Activated CD8-positive, alpha-beta T cell treated with anti-CD3 and anti-CD28 coated beads, Interleukin-2, amount 10 ng/mL, durations not matched to agents 7 days and 5 days (primary cell): ENCODE measurements at regions of chr2 and their contacts with region 1.

Region 1: GRCh38 chr2:118003396-118003824 is 10.5 kb downstream of the CCDC93 start:
- DNase-seq: peak; percentile 71
- ATAC-seq: peak; percentile 98
- H3K4me3 Mint-ChIP-seq: no peak overlapping the region
- H3K27ac Mint-ChIP-seq: no peak overlapping the region
- H3K4me1 Mint-ChIP-seq: peaks cover 7% of the 10 kb centered on the region
- H3K27me3 Mint-ChIP-seq: no peaks in the 10 kb centered on the region

Region 2: GRCh38 chr2:117656546-117656945 is 346.9 kb before region 1 on chr2:
- CTCF ChIA-PET with region 1: no interaction called
- POLR2A ChIA-PET with region 1: no interaction called
- DNase-seq: no peak
- ATAC-seq: no peak
- H3K4me3 Mint-ChIP-seq: no peak overlapping the region
- H3K27ac Mint-ChIP-seq: no peak overlapping the region
- H3K4me1 Mint-ChIP-seq: no peaks in the 10 kb centered on the region
- H3K27me3 Mint-ChIP-seq: no peaks in the 10 kb centered on the region

Region 3: DNA sequence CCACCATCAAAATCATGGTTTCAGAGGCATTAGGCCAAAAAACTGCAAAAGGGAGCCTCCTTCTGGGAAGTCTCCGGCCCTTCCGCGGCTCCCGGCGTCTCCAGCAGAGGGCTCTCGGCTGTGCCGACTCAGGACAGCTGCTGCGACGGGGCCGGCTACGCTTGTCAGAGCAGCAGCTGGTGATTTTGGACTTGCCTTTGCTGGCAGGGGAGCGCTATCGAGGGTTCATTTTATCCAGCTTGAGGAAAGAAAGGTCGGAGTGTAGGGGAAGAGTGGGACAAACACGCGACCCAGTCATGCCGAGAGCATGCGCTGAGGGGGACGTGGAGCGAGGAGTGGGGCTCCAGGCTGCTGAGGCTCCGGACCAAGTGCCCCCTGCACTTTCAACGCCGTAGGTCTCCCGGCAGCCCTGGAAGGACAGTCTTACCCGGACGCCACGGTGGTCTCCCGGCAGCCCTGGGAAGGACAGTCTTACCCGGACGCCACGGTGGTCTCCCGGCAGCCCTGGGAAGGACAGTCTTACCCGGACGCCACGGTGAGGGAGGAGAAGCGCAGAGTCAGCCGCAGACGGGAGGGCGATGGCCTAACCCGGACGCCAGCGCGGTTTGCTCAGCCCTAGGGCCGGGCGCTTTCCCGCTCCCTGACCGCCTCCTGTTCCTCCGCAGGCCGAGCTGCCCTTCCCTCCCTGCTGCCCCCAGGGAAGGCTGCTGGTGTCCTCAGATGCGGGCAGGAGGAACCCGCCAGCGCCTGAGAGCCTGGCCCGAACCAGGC is 167.2 kb before region 1 on chr2:
- CTCF ChIA-PET with region 1: interaction called, 22 read pairs
- POLR2A ChIA-PET with region 1: no interaction called
- DNase-seq: peak; percentile 56
- ATAC-seq: peak; percentile 94
- H3K4me3 Mint-ChIP-seq: peak overlapping the region; percentile 34
- H3K27ac Mint-ChIP-seq: peak overlapping the region; percentile 51
- H3K4me1 Mint-ChIP-seq: peaks cover 3% of the 10 kb centered on the region
- H3K27me3 Mint-ChIP-seq: no peaks in the 10 kb centered on the region

Region 4: GRCh38 chr2:117956036-117956796 is 47.2 kb before region 1 on chr2:
- CTCF ChIA-PET with region 1: interaction called, 22 read pairs
- POLR2A ChIA-PET with region 1: no interaction called
- DNase-seq: no peak
- ATAC-seq: no peak
- H3K4me3 Mint-ChIP-seq: no peak overlapping the region
- H3K27ac Mint-ChIP-seq: no peak overlapping the region
- H3K4me1 Mint-ChIP-seq: no peaks in the 10 kb centered on the region
- H3K27me3 Mint-ChIP-seq: no peaks in the 10 kb centered on the region

Region 5: DNA sequence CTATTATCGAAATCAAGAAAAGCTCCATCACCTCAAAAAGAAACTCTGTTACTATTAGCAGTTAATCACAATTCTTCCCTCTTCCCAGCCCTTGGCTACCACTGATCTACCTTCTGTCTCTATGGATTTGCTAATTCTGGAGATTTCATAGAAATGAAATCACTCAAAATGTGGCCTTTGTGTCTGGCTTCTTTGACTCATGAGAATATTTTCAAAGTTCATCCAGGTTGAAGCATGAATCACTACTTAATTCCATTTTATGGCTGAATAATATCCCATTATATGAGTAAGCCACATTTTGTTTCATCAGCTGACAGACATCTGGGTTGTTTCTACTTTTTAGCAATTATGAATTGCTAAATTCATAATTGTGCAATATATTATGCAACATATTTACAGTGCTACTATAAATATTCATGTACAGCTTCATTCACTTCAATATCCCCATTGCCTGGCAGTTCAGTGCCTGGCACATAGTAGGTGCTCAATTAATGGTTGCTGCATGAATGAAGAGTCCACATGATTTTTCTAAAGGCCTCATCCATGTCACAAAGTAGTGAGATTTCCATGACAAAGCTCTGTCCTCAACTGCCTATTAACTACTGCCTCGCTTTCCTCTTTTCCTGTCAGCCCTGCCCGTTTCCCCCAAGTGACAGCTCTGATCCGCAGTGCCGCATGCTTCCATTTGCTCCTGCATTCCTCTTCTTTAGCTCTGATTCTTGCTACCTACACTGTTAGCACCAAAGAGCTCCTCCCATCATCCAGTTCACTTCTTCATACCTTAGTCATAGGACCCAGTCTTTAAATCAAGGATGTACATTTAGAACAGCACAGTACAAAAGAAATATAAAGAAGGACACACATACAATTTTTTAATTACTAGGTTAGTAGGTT is 22.4 kb before region 1 on chr2:
- CTCF ChIA-PET with region 1: interaction called, 92 read pairs
- POLR2A ChIA-PET with region 1: no interaction called
- DNase-seq: no peak
- ATAC-seq: no peak
- H3K4me3 Mint-ChIP-seq: no peak overlapping the region
- H3K27ac Mint-ChIP-seq: no peak overlapping the region
- H3K4me1 Mint-ChIP-seq: no peaks in the 10 kb centered on the region
- H3K27me3 Mint-ChIP-seq: no peaks in the 10 kb centered on the region

Region 6: DNA sequence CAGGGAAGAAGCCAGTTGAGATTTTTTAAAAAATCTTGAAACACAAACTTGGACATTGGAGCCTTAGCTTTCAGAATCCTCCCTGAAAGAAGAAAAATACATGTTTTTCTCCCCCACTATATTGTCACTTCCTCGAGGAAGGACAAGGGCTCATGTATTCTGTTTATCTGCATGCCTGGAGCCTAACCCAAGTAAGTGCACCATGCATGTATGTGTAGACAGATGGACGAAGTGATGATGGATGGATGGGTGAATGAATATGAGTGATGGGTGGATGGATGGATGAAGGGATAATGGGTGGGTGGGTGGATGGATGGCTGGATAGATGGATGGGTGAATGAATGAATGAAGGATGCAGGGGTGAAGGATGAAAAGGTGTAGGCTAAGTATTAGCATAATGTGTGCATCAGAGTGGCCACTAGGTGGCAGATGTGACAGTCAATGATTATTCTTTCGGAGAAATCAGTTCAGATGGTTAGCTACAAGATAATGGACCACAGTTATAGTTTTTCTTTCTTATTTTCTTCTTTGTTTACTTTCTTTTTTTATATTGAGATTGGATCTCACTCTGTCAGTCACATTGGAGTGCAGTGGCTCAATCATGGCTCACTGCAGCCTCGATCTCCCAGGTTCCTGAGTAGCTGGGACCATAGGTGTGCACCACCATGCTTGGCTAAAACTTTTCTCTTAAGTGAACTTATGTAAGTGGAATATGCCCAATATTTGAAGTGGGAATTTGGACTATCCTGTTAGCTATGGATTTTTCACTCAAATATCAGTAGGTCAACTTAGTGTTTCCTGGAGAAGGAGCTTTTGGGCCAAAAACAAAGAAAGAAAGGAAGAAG is 29.0 kb after region 1 on chr2:
- CTCF ChIA-PET with region 1: interaction called, 10 read pairs
- POLR2A ChIA-PET with region 1: no interaction called
- DNase-seq: peak; percentile 64
- ATAC-seq: peak; percentile 68
- H3K4me3 Mint-ChIP-seq: no peak overlapping the region
- H3K27ac Mint-ChIP-seq: no peak overlapping the region
- H3K4me1 Mint-ChIP-seq: no peaks in the 10 kb centered on the region
- H3K27me3 Mint-ChIP-seq: peaks cover 25% of the 10 kb centered on the region